ENCODE measurements at regions of chr15 and their contacts with region 1.

Region 1: DNA sequence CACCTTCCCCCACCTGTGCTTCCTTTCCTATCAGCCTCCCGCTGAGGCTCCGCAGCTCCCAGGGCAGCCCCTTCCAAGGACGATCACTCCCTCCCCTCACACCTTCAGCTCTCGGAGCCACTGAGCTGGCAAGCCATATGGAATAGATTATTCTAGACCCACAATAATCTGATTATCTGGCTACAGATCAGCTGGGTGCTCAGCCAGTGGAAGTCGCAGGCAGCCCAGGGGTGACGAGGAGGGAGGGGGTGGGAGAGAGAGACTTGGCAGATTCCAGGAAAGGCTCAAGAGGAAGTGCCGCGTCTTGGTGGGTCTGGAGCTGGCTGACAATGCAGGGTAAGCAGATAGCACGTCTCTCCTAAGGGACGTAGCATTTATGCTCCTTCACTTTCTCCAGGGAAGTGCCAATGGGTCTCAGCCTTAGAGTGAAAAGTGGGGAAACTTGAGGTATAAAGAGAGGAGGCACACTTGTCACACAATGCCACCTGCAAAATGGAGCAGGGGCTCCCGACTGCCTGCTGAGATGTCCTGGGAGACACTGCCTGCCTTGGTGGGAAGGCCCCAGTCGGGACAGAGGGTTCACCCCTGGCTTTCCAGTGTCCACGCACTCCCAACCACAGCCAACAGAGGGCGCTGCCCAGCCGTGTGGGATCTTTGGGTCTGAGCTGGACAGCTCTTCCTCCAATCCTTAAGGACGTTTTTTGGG is 9.4 kb upstream of the MESP1 start:
- DNase-seq: peak in 1 of 2 donors; percentile 86
- H3K4me3 ChIP-seq: no peak overlapping the region
- H3K27ac ChIP-seq: no peak overlapping the region
- H3K4me1 ChIP-seq: no peaks in the 10 kb centered on the region
- H3K27me3 ChIP-seq: no peaks in the 10 kb centered on the region
- CTCF ChIP-seq: peak; percentile 90 to 93 (median 91)

Region 2: GRCh38 chr15:89874926-89875564 is 114.6 kb after region 1 on chr15:
- intact Hi-C with region 1: loop called (anchors 1 kb)
- DNase-seq: peak; percentile 19 to 90
- H3K4me3 ChIP-seq: no peak overlapping the region
- H3K27ac ChIP-seq: no peak overlapping the region
- H3K4me1 ChIP-seq: no peaks in the 10 kb centered on the region
- H3K27me3 ChIP-seq: no peaks in the 10 kb centered on the region
- CTCF ChIP-seq: peak; percentile 84 to 95 (median 89)

Region 3: GRCh38 chr15:90086868-90087268 is 326.4 kb after region 1 on chr15:
- intact Hi-C with region 1: loop called (anchors 5 kb)
- DNase-seq: no peak
- H3K4me3 ChIP-seq: no peak overlapping the region
- H3K27ac ChIP-seq: no peak overlapping the region
- H3K4me1 ChIP-seq: peaks cover 0 to 5% of the 10 kb centered on the region in 2 donors
- H3K27me3 ChIP-seq: no peaks in the 10 kb centered on the region
- CTCF ChIP-seq: peak; percentile 21 to 57 (median 46)

Region 4: DNA sequence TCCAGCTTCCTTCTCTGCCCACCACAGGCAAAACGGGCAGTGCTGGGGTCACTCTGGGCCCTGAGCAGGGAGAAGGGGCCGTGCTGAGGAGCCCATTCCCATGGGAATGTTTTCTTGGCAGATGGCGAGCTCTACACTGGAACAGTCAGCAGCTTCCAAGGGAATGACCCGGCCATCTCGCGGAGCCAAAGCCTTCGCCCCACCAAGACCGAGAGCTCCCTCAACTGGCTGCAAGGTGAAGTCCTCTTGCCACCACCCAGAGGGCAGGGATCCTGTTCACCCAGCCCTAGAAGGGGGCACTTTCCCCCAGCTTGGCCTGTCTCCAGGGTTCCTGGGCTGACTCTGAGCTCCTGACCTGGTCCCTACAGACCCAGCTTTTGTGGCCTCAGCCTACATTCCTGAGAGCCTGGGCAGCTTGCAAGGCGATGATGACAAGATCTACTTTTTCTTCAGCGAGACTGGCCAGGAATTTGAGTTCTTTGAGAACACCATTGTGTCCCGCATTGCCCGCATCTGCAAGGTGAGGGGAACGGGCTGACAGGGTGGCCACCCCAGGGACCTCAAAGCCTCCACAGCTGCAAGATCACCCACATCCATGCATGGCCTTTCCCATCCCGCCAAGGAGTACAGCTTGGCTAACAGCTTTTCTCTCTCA is 460.9 kb after region 1 on chr15:
- intact Hi-C with region 1: loop called (anchors 10 kb)
- DNase-seq: peak; percentile 42 to 88
- H3K4me3 ChIP-seq: no peak overlapping the region
- H3K27ac ChIP-seq: peak overlapping the region in 1 of 2 donors; percentile 35
- H3K4me1 ChIP-seq: peaks cover 4 to 5% of the 10 kb centered on the region in 2 donors
- H3K27me3 ChIP-seq: no peaks in the 10 kb centered on the region
- CTCF ChIP-seq: peak; percentile 74 to 92 (median 80)